Adrenal gland (tissue), 19 donors: ENCODE measurements at regions of chr20 and their contacts with region 1.

Region 1: DNA sequence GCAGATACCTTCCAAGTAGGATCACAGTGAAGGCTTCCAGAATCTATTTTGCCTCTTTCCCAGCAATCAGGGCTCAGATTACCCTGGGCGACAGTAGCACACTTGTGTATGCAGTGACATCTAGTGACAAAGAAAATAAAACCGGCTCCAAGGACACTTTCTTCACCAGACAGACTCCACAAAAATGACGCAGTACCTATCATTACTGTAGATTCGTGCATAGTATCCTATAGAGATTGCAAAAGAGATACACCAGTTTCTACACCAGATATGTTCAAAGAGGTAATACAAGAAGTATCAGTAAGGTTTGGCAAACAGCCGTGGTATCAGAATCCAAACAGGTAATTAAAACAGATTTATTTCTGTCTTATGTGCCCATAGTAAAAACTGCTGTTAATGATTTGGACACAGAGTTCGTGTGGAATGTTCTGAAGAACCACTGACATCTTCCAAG is 600.4 kb upstream of the JAG1 start:
- DNase-seq: peak; percentile 33 to 63 (median 56)
- H3K4me3 ChIP-seq: no peak overlapping the region
- H3K27ac ChIP-seq: no peak overlapping the region
- H3K4me1 ChIP-seq: no peaks in the 10 kb centered on the region
- H3K27me3 ChIP-seq: no peaks in the 10 kb centered on the region
- CTCF ChIP-seq: peak; percentile 24 to 71 (median 63)
- POLR2A ChIP-seq: no peak

Region 2: DNA sequence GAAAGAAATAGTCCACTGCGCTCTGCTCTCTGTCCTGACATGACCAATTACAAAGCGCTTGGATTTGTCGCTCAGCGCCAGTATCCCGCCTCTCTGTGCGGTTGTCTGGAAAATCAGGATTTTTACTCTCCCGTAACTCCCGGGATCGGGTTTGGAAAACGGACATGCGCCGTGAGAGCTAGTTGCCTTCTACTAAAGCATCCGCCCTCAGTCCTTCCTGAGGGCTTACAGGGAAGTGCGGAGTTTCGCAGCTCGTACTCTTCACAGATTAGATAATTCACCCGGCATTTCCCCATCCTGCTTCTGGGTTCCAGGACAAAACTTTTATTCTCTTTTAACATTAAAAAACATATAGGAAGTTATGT is 839.7 kb before region 1 on chr20:
- intact Hi-C with region 1: loop called in 1 of 2 experiments (anchors 10 kb)
- DNase-seq: peak; percentile 93 to 99 (median 96)
- H3K4me3 ChIP-seq: peak overlapping the region in 2 of 4 donors; percentile 78 to 86
- H3K27ac ChIP-seq: peak overlapping the region; percentile 82 to 93 (median 91)
- H3K4me1 ChIP-seq: peaks cover 16 to 35% of the 10 kb centered on the region in 2 donors
- H3K27me3 ChIP-seq: no peaks in the 10 kb centered on the region
- CTCF ChIP-seq: no peak
- POLR2A ChIP-seq: peak; percentile 98 to 99

Region 3: DNA sequence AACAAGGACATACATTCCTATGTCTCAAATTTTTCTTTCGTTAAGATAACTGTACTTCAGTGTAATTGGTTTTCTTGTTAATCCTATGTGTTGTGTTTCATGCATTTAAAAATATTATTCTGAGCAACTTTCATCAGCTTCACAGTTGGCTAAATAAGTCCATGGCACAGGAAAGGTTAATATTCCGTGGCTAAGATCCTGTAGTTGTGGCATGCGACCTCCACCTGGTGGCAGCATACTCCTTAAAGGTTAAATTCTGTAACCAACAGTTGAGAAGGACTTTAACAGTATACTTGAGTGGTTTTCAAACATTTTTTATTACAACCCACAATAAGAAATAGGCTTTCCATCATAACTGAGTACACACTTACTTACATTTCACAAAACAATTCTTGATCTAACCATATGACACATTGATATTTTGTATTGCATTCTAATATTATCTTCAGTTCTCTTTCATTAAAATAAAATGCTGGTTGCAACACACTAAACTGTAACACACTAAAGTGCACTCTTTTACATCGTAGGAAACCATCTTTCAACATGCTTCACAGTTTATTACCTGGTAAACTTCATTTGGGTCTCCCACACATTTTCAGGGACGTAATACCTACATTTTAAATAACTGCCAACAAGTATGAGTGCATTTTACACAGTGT is 720.7 kb before region 1 on chr20:
- intact Hi-C with region 1: loop called in 1 of 2 experiments (anchors 5 kb)
- DNase-seq: peak; percentile 49 to 91 (median 75)
- H3K4me3 ChIP-seq: no peak overlapping the region
- H3K27ac ChIP-seq: no peak overlapping the region
- H3K4me1 ChIP-seq: no peaks in the 10 kb centered on the region
- H3K27me3 ChIP-seq: no peaks in the 10 kb centered on the region
- CTCF ChIP-seq: peak; percentile 70 to 81 (median 80)
- POLR2A ChIP-seq: no peak

Region 4: GRCh38 chr20:10673988-10674711 is 600.0 kb before region 1 on chr20 and contains the start of gene JAG1:
- intact Hi-C with region 1: loop called in 1 of 2 experiments (anchors 10 kb)
- DNase-seq: peak; percentile 93 to 96 (median 95)
- H3K4me3 ChIP-seq: peak within 1 kb of the TSS; percentile 43 to 75 (median 63)
- H3K27ac ChIP-seq: peak within 1 kb of the TSS; percentile 52 to 97 (median 87)
- H3K4me1 ChIP-seq: peaks cover 12 to 13% of the 10 kb centered on the region in 2 donors
- H3K27me3 ChIP-seq: no peaks in the 10 kb centered on the region
- CTCF ChIP-seq: no peak
- POLR2A ChIP-seq: peak; percentile 18 to 40
- total RNA-seq, gene JAG1: 7.9 to 22.0 (median 15.7) TPM

Region 5: DNA sequence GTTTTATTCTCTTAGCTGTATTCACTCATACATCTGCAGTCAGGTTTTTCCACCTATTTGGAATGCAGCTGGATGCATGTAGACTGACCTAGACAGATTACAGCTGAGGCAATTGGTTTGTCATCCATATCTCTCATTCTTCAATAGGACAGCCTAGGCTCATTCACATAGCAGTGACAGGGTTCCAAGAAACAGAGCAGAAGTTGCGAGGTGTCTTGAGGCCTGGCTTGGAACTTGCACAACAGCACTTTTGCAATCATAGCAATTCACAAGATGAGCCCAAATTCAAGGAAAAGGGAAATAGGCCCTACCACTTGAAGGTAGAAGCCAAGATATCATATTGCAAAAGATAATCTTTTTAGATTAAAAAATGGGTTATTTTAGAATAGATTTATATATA is 91.4 kb before region 1 on chr20:
- intact Hi-C with region 1: no loop called
- DNase-seq: peak in 1 of 7 donors; percentile 26
- H3K4me3 ChIP-seq: no peak overlapping the region
- H3K27ac ChIP-seq: no peak overlapping the region
- H3K4me1 ChIP-seq: no peaks in the 10 kb centered on the region
- H3K27me3 ChIP-seq: no peaks in the 10 kb centered on the region
- CTCF ChIP-seq: no peak
- POLR2A ChIP-seq: no peak

Region 6: DNA sequence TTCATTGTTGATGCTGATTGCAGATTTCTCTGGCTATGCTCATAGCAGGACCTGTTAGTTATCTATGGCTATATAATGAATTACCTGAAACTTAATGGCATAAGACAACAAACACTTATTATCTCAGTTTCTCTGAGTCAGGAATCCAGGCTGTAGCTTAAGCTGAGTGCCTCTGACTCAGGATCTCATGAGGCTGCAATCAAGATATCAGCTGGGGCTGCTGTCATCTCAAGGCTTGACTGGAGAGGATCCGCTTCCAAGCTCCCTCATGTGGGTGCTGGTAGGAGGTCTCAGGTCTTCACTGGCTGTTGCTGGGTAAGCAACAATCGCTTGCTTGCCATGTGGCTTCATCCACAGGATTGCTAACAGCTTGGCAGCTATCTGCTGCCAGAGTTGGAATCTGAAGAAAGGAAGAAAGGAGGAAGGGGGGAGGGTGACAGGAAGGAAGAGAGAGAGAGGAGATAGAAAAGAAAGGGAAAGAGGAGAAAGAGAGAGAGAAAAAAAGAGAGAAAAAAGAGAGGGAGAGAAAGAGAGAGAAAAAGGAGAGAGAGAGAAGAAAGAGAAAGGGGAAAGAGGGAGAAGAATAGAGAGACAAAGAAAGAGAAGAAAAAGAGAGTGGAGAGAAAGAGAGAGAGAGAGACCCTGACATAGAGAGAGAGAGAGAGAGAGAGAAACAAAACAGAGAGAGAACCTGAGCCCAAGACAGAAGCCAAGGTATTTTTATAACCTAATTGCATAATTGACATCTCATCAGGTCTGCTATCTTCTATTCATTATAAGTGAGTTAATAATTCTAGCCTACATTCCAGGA is 64.5 kb after region 1 on chr20:
- intact Hi-C with region 1: no loop called
- DNase-seq: no peak
- H3K4me3 ChIP-seq: no peak overlapping the region
- H3K27ac ChIP-seq: no peak overlapping the region
- H3K4me1 ChIP-seq: no peaks in the 10 kb centered on the region
- H3K27me3 ChIP-seq: no peaks in the 10 kb centered on the region
- CTCF ChIP-seq: no peak
- POLR2A ChIP-seq: no peak

Region 7: DNA sequence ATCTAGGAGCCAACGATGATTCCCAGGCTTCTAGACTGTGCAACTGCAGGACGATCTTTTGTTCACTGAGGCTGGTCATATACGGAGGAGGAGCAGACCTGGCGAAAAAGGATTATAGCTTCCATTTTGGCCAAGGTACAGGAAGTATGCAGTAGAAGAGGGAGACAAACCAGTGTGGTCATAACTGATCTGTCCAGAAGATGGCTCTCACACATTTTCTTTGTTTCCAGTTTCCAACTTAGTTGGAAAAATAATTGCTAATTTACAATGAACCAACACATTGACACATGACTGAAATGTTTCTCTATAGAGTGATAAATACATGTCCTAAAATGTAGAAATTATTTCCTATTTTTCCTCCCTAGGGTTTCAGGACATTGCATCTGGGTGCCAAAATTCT is 279.4 kb after region 1 on chr20:
- intact Hi-C with region 1: no loop called
- DNase-seq: no peak
- H3K4me3 ChIP-seq: no peak overlapping the region
- H3K27ac ChIP-seq: no peak overlapping the region
- H3K4me1 ChIP-seq: no peaks in the 10 kb centered on the region
- H3K27me3 ChIP-seq: no peaks in the 10 kb centered on the region
- CTCF ChIP-seq: peak in 4 of 6 experiments; percentile 8 to 42 (median 28)
- POLR2A ChIP-seq: no peak